Activated CD4-positive, alpha-beta memory T cell treated with anti-CD3 and anti-CD28 coated beads, Interleukin-2, amount 10 ng/mL, durations not matched to agents 7 days and 5 days (primary cell): ENCODE measurements at regions of chr9 and their contacts with region 1.

Region 1: DNA sequence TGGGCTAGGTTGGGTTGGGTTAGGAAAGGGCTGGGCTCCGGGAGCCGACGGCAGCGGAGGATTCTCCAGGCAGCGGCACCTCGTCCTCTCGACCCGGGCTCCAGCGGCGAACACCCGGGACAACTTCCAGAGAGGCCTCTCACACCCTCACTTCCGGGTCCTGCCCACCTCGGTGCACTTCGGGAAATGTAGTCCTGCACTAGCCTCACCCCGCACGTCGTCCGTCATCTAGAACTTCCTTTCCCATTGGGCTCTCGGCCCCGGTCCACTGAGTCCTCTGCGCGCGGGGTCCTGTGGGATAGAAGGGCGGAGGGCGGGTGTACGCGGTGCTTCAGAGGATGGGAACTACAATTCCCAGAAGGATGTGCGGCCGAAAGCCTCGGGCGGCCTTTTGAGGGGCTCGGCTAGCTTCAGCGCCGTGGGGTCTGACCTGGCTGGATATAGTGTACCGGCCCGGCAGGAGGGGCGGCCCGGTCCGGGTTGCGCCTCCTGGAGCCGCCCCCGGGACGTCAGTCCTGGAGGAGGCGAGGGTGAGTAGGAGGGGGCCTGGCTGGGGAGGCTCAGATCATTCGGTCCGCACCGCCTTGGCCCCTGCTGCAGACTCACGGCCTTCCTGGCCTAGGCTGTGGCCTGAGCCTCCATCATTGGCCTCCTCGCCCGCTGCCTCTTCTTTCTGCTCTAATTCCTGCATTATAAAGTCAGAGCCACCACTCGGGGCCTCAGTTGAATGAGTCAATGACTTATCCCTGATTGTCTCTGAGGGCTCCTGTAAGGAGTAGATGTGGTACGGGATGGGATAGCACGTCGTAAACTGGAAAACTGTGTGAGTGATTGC is at the starts of genes ERP44 and INVS:
- DNase-seq: peak; percentile 98
- H3K4me3 Mint-ChIP-seq: peak within 1 kb of the TSS; percentile 100
- H3K27ac Mint-ChIP-seq: peak within 1 kb of the TSS; percentile 93
- H3K4me1 Mint-ChIP-seq: peaks cover 29% of the 10 kb centered on the region
- H3K27me3 Mint-ChIP-seq: no peaks in the 10 kb centered on the region
- total RNA-seq, gene ERP44: 22.3 to 23.3 TPM
- total RNA-seq, gene INVS: 13.1 to 13.2 TPM

Region 2: DNA sequence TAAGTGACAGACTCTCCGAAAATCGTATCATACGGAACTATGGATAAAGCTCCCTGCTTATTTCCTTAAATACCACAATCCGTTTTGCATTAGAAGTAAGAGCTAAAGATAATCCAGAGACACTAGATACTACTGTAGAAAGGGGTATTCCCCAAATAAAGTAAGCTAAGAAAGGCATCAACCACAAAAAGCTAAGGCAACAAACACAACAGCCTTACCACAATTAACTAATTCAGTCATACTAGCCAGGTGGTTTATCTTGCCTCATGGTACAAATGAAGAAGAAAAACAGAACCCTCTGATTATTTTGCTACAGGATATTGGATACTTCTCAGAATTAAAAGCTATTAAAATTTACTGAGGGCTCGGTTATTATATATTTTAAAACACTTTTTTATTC is 14.4 kb before region 1 on chr9:
- CTCF ChIA-PET with region 1: interaction called, 3 read pairs
- POLR2A ChIA-PET with region 1: interaction called, 15 read pairs
- DNase-seq: no peak
- H3K4me3 Mint-ChIP-seq: no peak overlapping the region
- H3K27ac Mint-ChIP-seq: no peak overlapping the region
- H3K4me1 Mint-ChIP-seq: peaks cover 64% of the 10 kb centered on the region
- H3K27me3 Mint-ChIP-seq: no peaks in the 10 kb centered on the region

Region 3: GRCh38 chr9:100340224-100340623 is 241.1 kb after region 1 on chr9:
- CTCF ChIA-PET with region 1: no interaction called
- POLR2A ChIA-PET with region 1: no interaction called
- DNase-seq: no peak
- H3K4me3 Mint-ChIP-seq: no peak overlapping the region
- H3K27ac Mint-ChIP-seq: no peak overlapping the region
- H3K4me1 Mint-ChIP-seq: peaks cover 8% of the 10 kb centered on the region
- H3K27me3 Mint-ChIP-seq: no peaks in the 10 kb centered on the region